H1 (cell line): ENCODE measurements at regions of chrX and their contacts with region 1.

Region 1: DNA sequence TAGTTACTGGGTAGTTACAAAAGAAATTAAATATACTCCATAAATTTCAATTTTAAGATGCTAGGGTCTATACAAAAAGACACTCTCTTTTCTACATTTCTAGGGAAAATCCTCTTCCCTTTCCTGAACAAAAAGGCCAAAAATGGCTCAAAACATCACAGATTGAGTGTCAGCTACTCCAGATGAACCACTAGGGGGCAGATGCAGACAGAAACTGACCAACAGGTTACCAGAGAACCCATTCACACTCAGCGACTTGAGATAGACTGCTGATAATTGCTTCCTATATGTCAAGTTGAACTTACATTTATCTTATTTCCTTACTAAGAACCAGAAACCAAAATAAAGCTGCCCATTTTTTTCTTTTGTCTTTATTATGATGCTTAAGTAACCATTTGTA is 83.4 kb upstream of the MID1IP1 start:
- DNase-seq: no peak
- H3K4me3 ChIP-seq: no peak overlapping the region
- H3K27ac ChIP-seq: no peak overlapping the region
- H3K4me1 ChIP-seq: no peaks in the 10 kb centered on the region
- H3K27me3 ChIP-seq: no peaks in the 10 kb centered on the region
- CTCF ChIP-seq: peak in 2 of 3 experiments; percentile 51 to 63; a peak in 3 of 4 replicates
- EP300 ChIP-seq: no peak
- POLR2A ChIP-seq: no peak
- RAD21 ChIP-seq: peak; percentile 59 to 67

Region 2: GRCh38 chrX:38232079-38232686 is 485.7 kb before region 1 on chrX:
- CTCF ChIA-PET with region 1: no interaction called
- POLR2A ChIA-PET with region 1: no interaction called
- DNase-seq: no peak
- H3K4me3 ChIP-seq: no peak overlapping the region
- H3K27ac ChIP-seq: no peak overlapping the region
- H3K4me1 ChIP-seq: no peaks in the 10 kb centered on the region
- H3K27me3 ChIP-seq: no peaks in the 10 kb centered on the region
- CTCF ChIP-seq: no peak
- EP300 ChIP-seq: no peak
- POLR2A ChIP-seq: no peak
- RAD21 ChIP-seq: no peak

Region 3: GRCh38 chrX:38732866-38733265 is 15.0 kb after region 1 on chrX:
- CTCF ChIA-PET with region 1: no interaction called
- POLR2A ChIA-PET with region 1: no interaction called
- DNase-seq: no peak
- H3K4me3 ChIP-seq: no peak overlapping the region
- H3K27ac ChIP-seq: no peak overlapping the region
- H3K4me1 ChIP-seq: no peaks in the 10 kb centered on the region
- H3K27me3 ChIP-seq: no peaks in the 10 kb centered on the region
- CTCF ChIP-seq: no peak
- EP300 ChIP-seq: no peak
- POLR2A ChIP-seq: no peak
- RAD21 ChIP-seq: no peak

Region 4: DNA sequence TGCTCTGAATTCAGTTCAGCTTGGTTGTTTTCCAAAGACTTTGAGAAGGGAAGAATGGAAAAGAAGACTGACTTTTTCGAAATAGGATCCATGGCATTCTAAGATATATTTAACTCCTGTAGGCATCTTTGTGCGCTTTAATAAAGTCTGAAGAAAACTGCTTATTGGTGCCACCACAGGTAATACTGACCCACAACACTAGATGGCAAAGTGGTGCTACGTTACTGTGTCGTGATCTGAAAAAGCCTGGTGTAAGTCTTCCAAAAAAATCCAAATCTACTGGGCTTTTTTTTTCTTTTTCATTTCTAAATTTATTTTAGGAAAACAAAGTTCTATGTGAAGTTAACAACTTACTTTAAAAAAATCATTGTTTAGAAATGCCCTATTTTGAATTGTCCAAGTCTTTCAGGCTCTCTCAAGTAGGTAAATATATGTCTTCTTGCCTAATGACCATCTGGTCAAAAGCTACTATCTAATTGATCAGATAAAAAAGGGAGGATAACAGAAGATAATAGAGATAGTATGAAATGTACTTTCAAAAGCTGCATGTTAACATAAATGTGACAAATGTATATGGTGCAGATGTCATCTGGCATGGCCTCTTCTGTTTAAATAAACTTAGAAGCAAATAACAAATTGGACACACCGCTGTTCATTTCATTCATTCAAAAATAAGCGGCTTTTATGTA is 36.4 kb after region 1 on chrX:
- CTCF ChIA-PET with region 1: interaction called, 11 read pairs
- POLR2A ChIA-PET with region 1: no interaction called
- DNase-seq: no peak
- H3K4me3 ChIP-seq: no peak overlapping the region
- H3K27ac ChIP-seq: no peak overlapping the region
- H3K4me1 ChIP-seq: peaks cover 0 to 7% (median 2%) of the 10 kb centered on the region in 4 experiments; a peak in 4 of 7 replicates
- H3K27me3 ChIP-seq: no peaks in the 10 kb centered on the region
- CTCF ChIP-seq: peak in 2 of 3 experiments; percentile 44 to 50; a peak in 3 of 4 replicates
- EP300 ChIP-seq: no peak
- POLR2A ChIP-seq: no peak
- RAD21 ChIP-seq: peak; percentile 81 to 84